ENCODE measurements at regions of chr6 and their contacts with region 1.

Region 1: DNA sequence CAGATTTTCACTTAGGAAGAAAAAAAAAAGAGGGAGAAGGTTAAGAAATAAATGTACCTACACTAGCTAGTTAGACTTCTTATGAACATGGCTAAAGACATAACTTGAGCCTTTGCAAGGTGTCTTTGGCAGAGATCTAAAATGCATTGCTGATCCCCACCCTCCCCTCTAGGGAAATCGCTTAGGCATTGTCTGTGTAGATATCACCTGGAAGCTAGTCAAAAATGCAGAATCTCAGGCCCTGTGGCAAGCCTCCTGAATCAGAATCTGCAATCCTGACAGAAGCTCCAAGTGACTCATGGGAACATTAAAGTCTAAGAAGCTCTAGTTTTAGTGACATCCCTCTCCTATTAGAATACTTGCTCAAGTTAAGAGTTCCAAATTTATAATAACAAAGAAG is 455.5 kb upstream of the RNF217 start:
- DNase-seq: no peak
- H3K4me3 ChIP-seq: no peak overlapping the region
- H3K27ac ChIP-seq: no peak overlapping the region
- H3K27me3 ChIP-seq: no peaks in the 10 kb centered on the region
- CTCF ChIP-seq: no peak

Region 2: DNA sequence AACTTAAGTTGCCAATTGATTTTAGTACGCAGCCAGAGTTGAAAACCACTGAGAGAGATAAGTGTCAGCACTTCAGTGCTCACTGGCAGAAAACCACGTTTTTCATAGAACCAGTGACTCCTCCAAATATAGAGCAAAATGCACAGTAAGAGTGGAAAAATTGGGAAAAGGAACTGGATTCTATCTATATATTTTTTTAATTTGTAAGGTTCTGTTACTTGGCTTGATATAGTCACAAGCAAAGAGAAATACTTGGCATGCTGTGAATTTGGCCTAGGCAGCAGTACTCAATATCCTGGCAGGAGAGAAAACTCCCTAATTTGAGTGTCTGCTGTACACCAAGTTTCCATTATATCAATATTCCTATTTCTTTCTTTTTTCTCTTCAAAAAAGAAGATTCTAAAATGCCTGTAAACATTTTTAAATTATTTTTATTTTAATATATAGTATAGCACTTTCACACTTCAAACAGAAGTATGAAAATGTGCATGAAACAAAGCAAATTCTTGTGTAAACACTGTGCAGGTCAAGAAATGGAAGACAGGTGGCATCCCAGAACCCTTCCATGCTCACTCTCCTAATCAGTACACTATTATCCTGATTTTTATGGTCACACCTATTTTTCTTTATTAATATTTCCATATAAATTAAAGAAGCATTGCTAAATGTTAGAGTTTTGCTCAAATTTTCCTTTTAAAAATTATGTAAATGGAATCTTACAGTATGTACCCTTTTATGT is 106.3 kb before region 1 on chr6:
- CTCF ChIA-PET with region 1: interaction called, 10 read pairs
- POLR2A ChIA-PET with region 1: no interaction called
- DNase-seq: no peak
- H3K4me3 ChIP-seq: no peak overlapping the region
- H3K27ac ChIP-seq: no peak overlapping the region
- H3K27me3 ChIP-seq: no peaks in the 10 kb centered on the region
- CTCF ChIP-seq: no peak

Region 3: GRCh38 chr6:124551711-124552233 is 45.1 kb after region 1 on chr6:
- CTCF ChIA-PET with region 1: no interaction called
- POLR2A ChIA-PET with region 1: no interaction called
- DNase-seq: no peak
- H3K4me3 ChIP-seq: no peak overlapping the region
- H3K27ac ChIP-seq: no peak overlapping the region
- H3K27me3 ChIP-seq: no peaks in the 10 kb centered on the region
- CTCF ChIP-seq: no peak

Region 4: DNA sequence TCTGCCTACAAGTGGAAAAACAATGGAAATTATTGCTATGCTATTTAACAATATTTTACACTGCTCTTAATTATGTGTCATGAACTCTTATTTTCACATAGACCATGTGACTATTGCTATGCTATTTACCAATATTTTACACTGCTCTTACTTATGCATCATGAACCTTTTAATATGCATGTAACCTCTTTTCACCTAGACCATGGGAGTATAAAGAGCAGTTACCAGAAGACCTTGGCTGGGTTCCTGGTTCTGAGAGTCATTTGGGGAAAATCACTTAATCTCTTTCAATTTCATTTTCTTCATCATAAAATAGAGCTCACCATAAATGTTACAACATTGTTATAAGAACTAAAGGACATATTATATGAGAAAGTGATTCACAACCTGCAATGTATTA is 231.8 kb after region 1 on chr6:
- CTCF ChIA-PET with region 1: no interaction called
- POLR2A ChIA-PET with region 1: no interaction called
- DNase-seq: no peak
- H3K4me3 ChIP-seq: no peak overlapping the region
- H3K27ac ChIP-seq: no peak overlapping the region
- H3K27me3 ChIP-seq: no peaks in the 10 kb centered on the region
- CTCF ChIP-seq: no peak